MCF 10A (cell line): ENCODE measurements at regions of chrX and their contacts with region 1.

Region 1: GRCh38 chrX:136694431-136695087 is 46.6 kb downstream of the CD40LG start:
- DNase-seq: peak; percentile 52
- H3K4me3 Mint-ChIP-seq: no peak overlapping the region
- H3K27ac Mint-ChIP-seq: no peak overlapping the region
- H3K4me1 Mint-ChIP-seq: no peaks in the 10 kb centered on the region
- H3K27me3 Mint-ChIP-seq: peaks cover 49% of the 10 kb centered on the region
- CTCF ChIP-seq: peak; percentile 79

Region 2: GRCh38 chrX:136047969-136048368 is 646.6 kb before region 1 on chrX:
- CTCF ChIA-PET with region 1: no interaction called
- POLR2A ChIA-PET with region 1: no interaction called
- intact Hi-C with region 1: loop called (anchors 5 kb)
- DNase-seq: no peak
- H3K4me3 Mint-ChIP-seq: no peak overlapping the region
- H3K27ac Mint-ChIP-seq: no peak overlapping the region
- H3K4me1 Mint-ChIP-seq: no peaks in the 10 kb centered on the region
- H3K27me3 Mint-ChIP-seq: peaks cover 67% of the 10 kb centered on the region
- CTCF ChIP-seq: no peak

Region 3: GRCh38 chrX:136268051-136269048 is 426.2 kb before region 1 on chrX:
- CTCF ChIA-PET with region 1: interaction called, 6 read pairs
- POLR2A ChIA-PET with region 1: no interaction called
- intact Hi-C with region 1: loop called (anchors 10 kb)
- DNase-seq: peak; percentile 55
- H3K4me3 Mint-ChIP-seq: no peak overlapping the region
- H3K27ac Mint-ChIP-seq: no peak overlapping the region
- H3K4me1 Mint-ChIP-seq: peaks cover 7% of the 10 kb centered on the region
- H3K27me3 Mint-ChIP-seq: peaks cover 16% of the 10 kb centered on the region
- CTCF ChIP-seq: peak; percentile 67

Region 4: DNA sequence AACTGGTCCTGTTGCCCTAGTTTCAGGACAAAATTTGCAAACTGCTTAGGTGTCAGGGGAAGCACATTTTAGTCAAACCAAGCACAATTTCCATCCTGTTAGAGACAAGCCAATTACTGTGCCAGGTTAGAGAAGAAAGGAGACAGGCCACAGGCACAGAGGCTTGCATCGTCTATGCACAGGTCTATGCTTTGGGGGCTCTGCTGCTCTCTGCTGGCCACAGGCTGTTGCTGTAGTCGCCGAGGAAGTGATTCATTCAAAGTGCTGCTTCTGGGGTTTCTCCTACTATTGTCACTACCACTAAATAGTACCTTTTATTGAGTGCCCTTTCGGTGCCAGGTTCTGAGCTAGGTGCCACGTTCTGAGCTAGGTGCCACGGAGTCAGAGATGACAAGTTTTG is 117.0 kb before region 1 on chrX:
- CTCF ChIA-PET with region 1: interaction called, 8 read pairs
- POLR2A ChIA-PET with region 1: no interaction called
- intact Hi-C with region 1: loop called (anchors 1 kb)
- DNase-seq: peak; percentile 51
- H3K4me3 Mint-ChIP-seq: no peak overlapping the region
- H3K27ac Mint-ChIP-seq: no peak overlapping the region
- H3K4me1 Mint-ChIP-seq: no peaks in the 10 kb centered on the region
- H3K27me3 Mint-ChIP-seq: peaks cover 35% of the 10 kb centered on the region
- CTCF ChIP-seq: peak; percentile 56